Naive thymus-derived CD4-positive, alpha-beta T cell (primary cell): ENCODE measurements at regions of chr12 and their contacts with region 1.

Region 1: DNA sequence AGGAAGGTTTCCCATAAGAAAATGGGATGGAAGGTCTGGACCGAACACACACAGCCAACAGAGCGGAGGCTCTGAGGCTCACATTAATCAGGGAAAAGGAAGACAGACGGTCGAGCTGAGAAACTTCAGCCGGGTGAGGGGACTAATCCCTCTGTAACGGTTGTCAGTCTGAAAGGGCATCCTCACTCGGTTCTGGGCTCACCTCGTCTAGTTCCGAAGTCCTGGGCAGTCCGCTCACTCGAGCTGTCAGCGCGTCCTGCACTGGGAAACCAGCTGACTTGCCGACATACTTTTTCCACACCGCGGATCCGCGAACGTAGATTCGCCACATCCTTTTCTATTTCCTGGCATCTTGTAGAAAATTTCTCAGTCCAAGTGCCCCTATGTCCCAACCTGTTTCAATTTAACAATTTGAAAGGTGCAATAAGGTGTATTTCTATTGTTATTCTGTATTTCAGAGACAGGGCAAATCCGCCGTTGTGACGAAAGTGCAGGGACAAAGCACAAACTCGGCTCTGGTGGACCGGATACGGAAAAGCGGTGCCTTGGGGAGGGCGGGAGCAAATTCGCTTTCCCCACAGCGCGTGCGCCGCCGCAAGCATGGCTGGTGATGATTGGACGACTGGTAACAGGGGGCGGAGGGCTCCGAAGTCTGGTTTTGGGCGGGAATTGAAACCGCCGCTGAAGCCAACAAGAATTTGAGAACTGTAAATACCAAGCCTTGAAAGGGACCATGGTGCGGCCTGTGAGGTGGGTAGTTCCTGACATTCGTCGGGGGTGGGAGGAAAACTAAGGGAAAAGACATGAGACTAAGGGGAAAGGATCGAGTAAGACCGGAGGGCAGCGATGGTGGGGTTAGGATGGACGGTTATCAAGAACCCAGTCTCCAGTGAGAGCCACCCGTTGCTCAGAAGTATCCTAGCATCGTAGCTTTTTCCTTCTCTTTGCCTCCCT is at the start of gene RAD51AP1:
- DNase-seq: peak; percentile 87 to 98 (median 95)
- ATAC-seq: peak; percentile 100
- H3K4me3 ChIP-seq: peak within 1 kb of the TSS; percentile 90
- H3K4me3 Mint-ChIP-seq: peak within 1 kb of the TSS; percentile 91 to 99 (median 96)
- H3K27ac ChIP-seq: peak within 1 kb of the TSS; percentile 84
- H3K27ac Mint-ChIP-seq: peak within 1 kb of the TSS; percentile 96 to 99 (median 98)
- H3K4me1 ChIP-seq: peaks cover 11 to 13% of the 10 kb centered on the region in 2 donors
- H3K4me1 Mint-ChIP-seq: peaks cover 6 to 40% (median 32%) of the 10 kb centered on the region in 7 donors
- H3K27me3 ChIP-seq: no peaks in the 10 kb centered on the region
- H3K27me3 Mint-ChIP-seq: no peaks in the 10 kb centered on the region
- total RNA-seq, gene RAD51AP1: 0.13 to 37.6 (median 1.7) TPM

Region 2: DNA sequence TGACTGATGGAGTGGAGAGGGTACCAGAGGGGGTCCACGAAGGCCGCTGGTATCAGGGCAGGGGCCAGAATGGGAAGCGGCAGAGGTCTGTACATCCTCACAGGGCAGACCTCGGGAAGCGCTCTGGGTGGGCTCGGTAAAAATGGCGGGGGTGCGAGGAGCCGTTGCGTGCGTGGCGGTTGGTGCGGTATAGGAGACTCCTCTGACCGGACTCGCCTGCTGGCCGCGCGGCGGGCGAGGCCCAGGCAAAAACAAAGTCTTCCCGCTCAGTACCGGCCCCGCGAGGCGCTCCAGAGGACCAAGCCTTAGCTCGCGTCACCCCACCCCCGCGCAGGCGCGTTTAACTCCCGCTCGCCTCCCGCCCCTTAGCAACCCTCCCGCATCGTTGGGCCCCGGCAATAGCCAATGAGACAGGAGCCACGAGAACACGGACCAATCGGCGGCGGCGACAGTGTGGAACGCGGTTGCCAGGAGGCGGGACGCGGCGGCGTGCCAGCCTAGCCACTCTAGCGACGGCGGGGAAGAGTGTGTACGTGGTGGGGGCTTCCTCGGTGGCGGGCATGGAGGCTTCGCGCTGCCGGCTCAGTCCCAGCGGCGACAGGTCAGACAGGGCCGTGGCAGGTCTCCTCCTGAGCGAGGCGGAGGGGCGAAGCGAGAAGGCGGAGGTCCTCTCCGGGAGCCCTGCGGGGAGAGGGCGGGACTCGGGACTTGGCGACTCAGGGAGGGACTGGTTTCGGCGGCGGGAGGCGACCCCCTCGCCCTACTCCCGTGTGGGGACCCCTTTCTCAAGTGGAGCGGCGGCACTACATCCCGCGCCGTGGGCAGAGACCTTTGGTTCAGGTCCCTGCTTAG is 1647.9 kb before region 1 on chr12 and contains the start of gene TULP3:
- CTCF ChIA-PET with region 1: no interaction called
- POLR2A ChIA-PET with region 1: no interaction called
- intact Hi-C with region 1: loop called in 1 of 2 experiments (anchors 5 kb)
- DNase-seq: peak; percentile 95 to 98 (median 97)
- ATAC-seq: peak; percentile 99
- H3K4me3 ChIP-seq: peak within 1 kb of the TSS; percentile 96
- H3K4me3 Mint-ChIP-seq: peak within 1 kb of the TSS; percentile 93 to 100 (median 98)
- H3K27ac ChIP-seq: peak within 1 kb of the TSS; percentile 89
- H3K27ac Mint-ChIP-seq: peak within 1 kb of the TSS; percentile 81 to 97 (median 97)
- H3K4me1 ChIP-seq: peaks cover 3 to 8% of the 10 kb centered on the region in 2 donors
- H3K4me1 Mint-ChIP-seq: peaks cover 15 to 35% (median 31%) of the 10 kb centered on the region in 7 donors
- H3K27me3 ChIP-seq: no peaks in the 10 kb centered on the region
- H3K27me3 Mint-ChIP-seq: peaks cover 0 to 2% (median 0%) of the 10 kb centered on the region in 5 donors
- total RNA-seq, gene TULP3: 4.7 to 9.6 (median 7.4) TPM

Region 3: DNA sequence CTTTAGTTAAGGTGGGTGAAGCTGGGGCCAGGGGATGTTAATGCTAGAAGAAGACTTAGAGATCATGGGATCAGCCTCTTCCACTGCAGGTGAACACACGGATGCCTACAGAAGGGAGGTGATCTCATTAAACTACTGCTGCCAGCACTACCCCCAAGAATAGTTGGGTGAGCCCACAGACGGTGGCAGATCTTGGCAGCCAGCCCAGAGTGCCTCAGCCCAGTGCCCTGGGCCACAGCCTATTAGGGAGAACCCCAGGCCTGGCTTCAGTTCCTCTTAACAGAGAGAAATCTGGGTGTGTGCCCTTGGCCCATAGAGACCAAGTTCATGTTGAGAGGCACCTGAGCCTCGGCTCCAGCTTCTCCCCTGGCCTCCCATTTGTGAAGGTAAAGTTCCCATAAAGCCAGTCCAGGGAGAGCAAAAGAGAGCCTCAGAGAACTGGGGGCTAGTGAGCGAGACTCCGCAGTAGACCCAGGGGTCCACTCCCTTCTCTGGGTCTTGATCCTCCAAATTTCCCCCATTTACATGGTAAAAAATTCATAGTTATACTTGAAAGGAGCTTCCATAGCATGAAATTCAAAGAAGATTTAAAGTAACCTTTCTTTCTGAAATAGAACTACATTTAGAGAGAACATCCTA is 389.9 kb before region 1 on chr12:
- CTCF ChIA-PET with region 1: no interaction called
- POLR2A ChIA-PET with region 1: no interaction called
- intact Hi-C with region 1: loop called in 1 of 2 experiments (anchors 10 kb)
- DNase-seq: peak in 1 of 9 donors; percentile 37
- ATAC-seq: peak; percentile 80
- H3K4me3 ChIP-seq: no peak overlapping the region
- H3K4me3 Mint-ChIP-seq: no peak overlapping the region
- H3K27ac ChIP-seq: no peak overlapping the region
- H3K27ac Mint-ChIP-seq: peak overlapping the region in 5 of 9 donors; percentile 14 to 70 (median 61)
- H3K4me1 ChIP-seq: peaks cover 13 to 41% of the 10 kb centered on the region in 2 donors
- H3K4me1 Mint-ChIP-seq: peaks cover 20 to 93% (median 34%) of the 10 kb centered on the region in 7 donors
- H3K27me3 ChIP-seq: no peaks in the 10 kb centered on the region
- H3K27me3 Mint-ChIP-seq: no peaks in the 10 kb centered on the region

Region 4: DNA sequence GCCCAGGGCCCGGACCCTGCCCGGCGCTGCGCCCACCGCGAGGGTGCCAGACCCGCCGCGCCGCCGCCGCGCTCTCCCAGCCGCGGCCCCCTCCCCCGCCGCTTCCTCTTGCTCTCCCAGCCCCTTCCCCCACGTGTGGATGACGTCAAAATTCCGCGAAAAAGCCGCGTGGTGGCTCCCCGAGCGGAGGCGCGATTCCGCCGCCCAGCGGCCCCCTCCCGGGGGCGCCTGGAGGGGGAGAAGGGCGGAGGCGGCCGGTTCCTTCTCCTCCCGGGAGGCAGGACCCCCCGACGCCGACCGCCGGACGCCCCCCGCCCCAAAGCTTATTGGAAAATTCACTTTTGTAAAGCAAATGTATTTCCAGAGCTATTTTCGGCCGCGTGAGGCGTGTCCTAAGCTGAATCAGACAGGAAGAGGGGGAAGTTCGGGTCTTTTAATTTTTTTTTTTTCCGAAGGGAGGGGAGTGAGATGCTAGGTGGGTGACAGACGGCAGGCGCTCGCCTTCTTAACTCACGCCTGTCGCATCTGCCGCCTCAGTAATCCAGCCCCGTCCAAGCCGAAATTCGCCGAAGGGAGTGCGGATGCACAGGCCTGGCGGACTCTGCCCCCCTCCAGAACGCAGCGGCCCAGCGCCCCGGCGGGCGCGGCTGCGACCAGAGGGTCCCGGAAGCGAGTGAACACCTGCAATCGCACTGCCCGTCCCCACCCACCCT is 269.0 kb before region 1 on chr12:
- CTCF ChIA-PET with region 1: no interaction called
- POLR2A ChIA-PET with region 1: interaction called, 3 read pairs
- intact Hi-C with region 1: loop called in 1 of 2 experiments (anchors 1 kb)
- DNase-seq: peak; percentile 84 to 95 (median 94)
- ATAC-seq: peak; percentile 64
- H3K4me3 ChIP-seq: peak overlapping the region; percentile 85
- H3K4me3 Mint-ChIP-seq: peak overlapping the region; percentile 94 to 100 (median 97)
- H3K27ac ChIP-seq: peak overlapping the region; percentile 97
- H3K27ac Mint-ChIP-seq: peak overlapping the region; percentile 97 to 99 (median 98)
- H3K4me1 ChIP-seq: peaks cover 4 to 11% of the 10 kb centered on the region in 2 donors
- H3K4me1 Mint-ChIP-seq: peaks cover 4 to 29% (median 15%) of the 10 kb centered on the region in 7 donors
- H3K27me3 ChIP-seq: no peaks in the 10 kb centered on the region
- H3K27me3 Mint-ChIP-seq: peaks cover 0 to 35% (median 0%) of the 10 kb centered on the region in 5 donors

Region 5: DNA sequence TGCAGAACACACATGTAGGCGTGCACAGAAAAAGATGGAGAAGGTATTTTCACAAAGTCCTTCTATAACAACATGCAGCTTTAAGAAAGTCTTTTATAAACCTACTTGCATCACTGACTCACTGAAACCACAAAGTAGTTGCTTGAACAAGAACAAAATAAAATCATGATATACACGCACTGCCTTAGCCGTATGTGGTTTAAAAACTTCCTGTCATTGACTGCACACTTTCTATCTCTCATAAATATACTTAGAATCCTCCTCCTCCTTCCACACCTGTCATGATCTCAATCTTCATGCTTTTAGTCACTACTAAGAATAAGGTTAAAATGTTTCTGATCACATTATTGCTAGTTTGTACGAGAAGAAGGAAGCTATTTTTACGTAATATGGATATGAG is 31.6 kb before region 1 on chr12:
- CTCF ChIA-PET with region 1: no interaction called
- POLR2A ChIA-PET with region 1: interaction called, 3 read pairs
- intact Hi-C with region 1: loop called (anchors 1 kb)
- DNase-seq: peak in 7 of 9 donors; percentile 61 to 90 (median 84)
- ATAC-seq: peak; percentile 97
- H3K4me3 ChIP-seq: no peak overlapping the region
- H3K4me3 Mint-ChIP-seq: peak overlapping the region; percentile 12 to 75 (median 70)
- H3K27ac ChIP-seq: peak overlapping the region; percentile 62
- H3K27ac Mint-ChIP-seq: peak overlapping the region; percentile 78 to 95 (median 89)
- H3K4me1 ChIP-seq: peaks cover 13% of the 10 kb centered on the region in 2 donors
- H3K4me1 Mint-ChIP-seq: peaks cover 12 to 37% (median 28%) of the 10 kb centered on the region in 7 donors
- H3K27me3 ChIP-seq: no peaks in the 10 kb centered on the region
- H3K27me3 Mint-ChIP-seq: no peaks in the 10 kb centered on the region

Region 6: GRCh38 chr12:4591180-4591687 is 52.8 kb after region 1 on chr12:
- CTCF ChIA-PET with region 1: no interaction called
- POLR2A ChIA-PET with region 1: no interaction called
- intact Hi-C with region 1: no loop called
- DNase-seq: no peak
- ATAC-seq: no peak
- H3K4me3 ChIP-seq: no peak overlapping the region
- H3K4me3 Mint-ChIP-seq: no peak overlapping the region
- H3K27ac ChIP-seq: no peak overlapping the region
- H3K27ac Mint-ChIP-seq: peak overlapping the region in 1 of 9 donors; percentile 23
- H3K4me1 ChIP-seq: no peaks in the 10 kb centered on the region
- H3K4me1 Mint-ChIP-seq: peaks cover 0 to 1% (median 0%) of the 10 kb centered on the region in 7 donors
- H3K27me3 ChIP-seq: no peaks in the 10 kb centered on the region
- H3K27me3 Mint-ChIP-seq: peaks cover 8 to 18% (median 12%) of the 10 kb centered on the region in 5 donors

Region 7: GRCh38 chr12:4648501-4649357 is 110.2 kb after region 1 on chr12 and contains the starts of genes AKAP3 and NDUFA9:
- CTCF ChIA-PET with region 1: no interaction called
- POLR2A ChIA-PET with region 1: interaction called, 7 read pairs
- intact Hi-C with region 1: loop called (anchors 1 kb)
- DNase-seq: peak; percentile 53 to 87 (median 84)
- ATAC-seq: peak; percentile 97
- H3K4me3 ChIP-seq: peak within 1 kb of the TSS; percentile 92
- H3K4me3 Mint-ChIP-seq: peak within 1 kb of the TSS; percentile 88 to 99 (median 97)
- H3K27ac ChIP-seq: peak within 1 kb of the TSS; percentile 80
- H3K27ac Mint-ChIP-seq: peak within 1 kb of the TSS; percentile 90 to 99 (median 95)
- H3K4me1 ChIP-seq: peaks cover 14 to 15% of the 10 kb centered on the region in 2 donors
- H3K4me1 Mint-ChIP-seq: peaks cover 24 to 58% (median 46%) of the 10 kb centered on the region in 7 donors
- H3K27me3 ChIP-seq: no peaks in the 10 kb centered on the region
- H3K27me3 Mint-ChIP-seq: peaks cover 0 to 13% (median 0%) of the 10 kb centered on the region in 5 donors
- total RNA-seq, gene AKAP3: 1.2 to 6.9 (median 2.5) TPM
- total RNA-seq, gene NDUFA9: 55.5 to 103 (median 58.2) TPM